Activated B cell treated with CpG ODN at 0.5 μM for 24 hours (primary cell): ENCODE measurements at regions of chr13 and their contacts with region 1.

Region 1: DNA sequence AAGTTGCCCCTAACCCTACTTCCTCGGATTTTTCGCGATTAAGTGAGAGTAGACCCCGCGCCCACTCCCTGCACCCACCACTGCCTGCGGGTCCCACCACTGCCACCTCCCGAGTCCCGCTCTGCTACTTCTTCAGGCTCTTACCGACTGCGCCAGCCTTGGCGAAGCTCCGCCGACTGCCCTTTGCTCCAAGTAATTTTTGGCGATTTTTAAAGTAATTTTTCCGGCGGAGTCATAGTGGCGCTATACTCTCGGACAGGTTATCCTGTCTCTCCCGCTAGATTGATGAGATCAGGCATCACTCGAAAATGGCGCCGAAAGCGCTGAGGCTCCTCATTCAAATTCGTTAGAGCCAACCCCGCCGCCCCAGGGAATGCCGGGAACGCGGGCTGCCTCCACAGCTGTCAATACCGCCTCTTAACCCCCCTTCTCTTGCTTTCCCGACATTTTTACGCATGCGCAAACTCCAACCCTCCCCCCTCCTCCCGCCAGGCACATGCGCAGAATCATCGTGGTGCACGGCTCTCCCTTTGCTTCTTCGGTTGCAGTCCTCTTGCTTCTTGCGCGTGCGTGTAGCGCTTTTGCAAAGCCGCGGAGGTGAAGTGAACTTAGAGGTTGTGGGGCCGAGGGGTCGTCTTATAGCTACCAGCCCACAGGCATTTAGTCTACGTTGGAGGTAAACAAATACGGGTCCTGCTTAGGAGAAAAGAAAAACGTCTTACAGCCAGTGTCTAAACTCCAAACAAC is 66.6 kb downstream of the KCNRG start:
- DNase-seq: peak; percentile 95
- ATAC-seq: peak; percentile 73
- H3K4me3 Mint-ChIP-seq: peak overlapping the region; percentile 100
- H3K27ac Mint-ChIP-seq: peak overlapping the region; percentile 100
- H3K4me1 Mint-ChIP-seq: peaks cover 62% of the 10 kb centered on the region
- H3K27me3 Mint-ChIP-seq: no peaks in the 10 kb centered on the region
- CTCF ChIP-seq: no peak

Region 2: GRCh38 chr13:49936085-49936940 is 145.5 kb before region 1 on chr13 and contains the start of gene SPRYD7:
- CTCF ChIA-PET with region 1: no interaction called
- POLR2A ChIA-PET with region 1: interaction called, 15 read pairs
- intact Hi-C with region 1: loop called (anchors 1 kb)
- DNase-seq: peak; percentile 100
- ATAC-seq: peak; percentile 98
- H3K4me3 Mint-ChIP-seq: peak within 1 kb of the TSS; percentile 97
- H3K27ac Mint-ChIP-seq: peak within 1 kb of the TSS; percentile 91
- H3K4me1 Mint-ChIP-seq: peaks cover 32% of the 10 kb centered on the region
- H3K27me3 Mint-ChIP-seq: no peaks in the 10 kb centered on the region
- CTCF ChIP-seq: no peak
- total RNA-seq, gene SPRYD7: 3.7 and 4.5 TPM in 2 replicates

Region 3: DNA sequence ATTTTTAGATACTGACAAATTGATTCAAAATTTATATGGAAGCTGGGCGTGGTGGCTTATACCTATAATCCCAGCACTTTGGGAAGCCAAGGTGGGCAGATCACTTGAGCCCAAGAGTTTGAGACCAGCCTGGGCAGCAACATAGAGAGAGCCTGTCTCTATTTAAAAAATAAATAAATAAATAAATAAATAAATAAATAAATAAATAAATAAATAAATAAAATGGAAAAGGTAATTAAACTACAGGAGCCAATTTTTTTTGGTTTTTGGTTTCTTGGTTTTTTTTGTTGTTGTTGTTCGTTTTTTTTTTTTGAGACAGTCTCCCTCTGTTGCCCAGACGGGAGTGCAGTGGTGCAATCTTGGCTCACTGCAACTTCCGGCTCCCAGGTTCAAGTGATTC is 114.4 kb before region 1 on chr13:
- CTCF ChIA-PET with region 1: no interaction called
- POLR2A ChIA-PET with region 1: no interaction called
- intact Hi-C with region 1: no loop called
- DNase-seq: no peak
- ATAC-seq: no peak
- H3K4me3 Mint-ChIP-seq: no peak overlapping the region
- H3K27ac Mint-ChIP-seq: no peak overlapping the region
- H3K4me1 Mint-ChIP-seq: no peaks in the 10 kb centered on the region
- H3K27me3 Mint-ChIP-seq: no peaks in the 10 kb centered on the region
- CTCF ChIP-seq: no peak

Region 4: GRCh38 chr13:50106559-50106958 is 24.7 kb after region 1 on chr13:
- CTCF ChIA-PET with region 1: interaction called, 14 read pairs
- POLR2A ChIA-PET with region 1: interaction called, 43 read pairs
- intact Hi-C with region 1: loop called (anchors 1 kb)
- DNase-seq: no peak
- ATAC-seq: peak; percentile 85
- H3K4me3 Mint-ChIP-seq: peak overlapping the region; percentile 67
- H3K27ac Mint-ChIP-seq: peak overlapping the region; percentile 94
- H3K4me1 Mint-ChIP-seq: peaks cover 75% of the 10 kb centered on the region
- H3K27me3 Mint-ChIP-seq: no peaks in the 10 kb centered on the region
- CTCF ChIP-seq: no peak

Region 5: DNA sequence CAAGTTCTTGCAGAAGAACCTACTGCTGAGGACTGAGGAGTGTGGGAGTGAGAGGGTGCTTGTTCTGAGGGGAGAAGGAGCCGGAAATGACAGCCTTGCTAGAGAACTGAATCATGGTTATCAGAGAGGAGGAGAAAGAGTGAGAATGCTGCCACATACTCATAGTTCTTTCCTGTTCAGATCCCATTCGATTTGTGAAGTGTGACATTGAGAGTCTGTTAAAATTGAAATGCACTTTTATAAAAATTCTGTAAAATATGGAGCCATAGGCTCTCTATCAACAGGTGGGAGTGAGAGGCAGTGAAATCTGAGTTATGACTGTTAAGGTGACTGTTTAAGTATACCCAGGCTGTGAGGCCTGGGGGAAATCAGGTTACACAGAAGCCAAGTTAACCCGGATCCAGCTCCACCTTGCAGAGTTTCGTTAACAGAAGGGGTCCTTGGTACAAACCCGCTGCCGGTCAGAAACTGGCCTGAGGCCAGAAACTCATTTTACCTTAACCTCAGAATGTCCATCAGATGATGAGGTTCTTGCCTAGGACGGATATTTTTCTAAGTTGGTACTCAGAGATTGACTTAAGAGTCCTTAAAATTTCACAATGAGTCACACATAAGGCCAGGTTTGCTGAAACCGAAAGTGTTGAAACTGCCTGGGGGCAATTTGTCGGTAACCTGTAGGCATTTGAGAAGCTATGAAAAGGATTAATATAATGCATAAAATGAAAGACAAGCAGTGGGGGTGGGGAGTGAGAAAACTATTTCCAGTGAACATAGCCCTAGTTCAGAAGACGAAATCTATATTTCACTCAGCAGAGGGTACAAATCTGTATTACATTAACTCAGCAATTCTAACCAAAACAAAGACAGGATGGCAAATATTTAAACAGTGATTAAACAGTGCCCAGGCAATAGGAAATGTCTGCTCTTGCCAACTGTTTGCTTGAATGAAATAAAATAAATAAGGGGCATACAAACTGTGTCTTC is 283.8 kb after region 1 on chr13:
- CTCF ChIA-PET with region 1: interaction called, 4 read pairs
- POLR2A ChIA-PET with region 1: interaction called, 19 read pairs
- intact Hi-C with region 1: loop called (anchors 1 kb)
- DNase-seq: no peak
- ATAC-seq: peak; percentile 28
- H3K4me3 Mint-ChIP-seq: peak overlapping the region; percentile 63
- H3K27ac Mint-ChIP-seq: peak overlapping the region; percentile 86
- H3K4me1 Mint-ChIP-seq: peaks cover 57% of the 10 kb centered on the region
- H3K27me3 Mint-ChIP-seq: no peaks in the 10 kb centered on the region
- CTCF ChIP-seq: no peak

Region 6: DNA sequence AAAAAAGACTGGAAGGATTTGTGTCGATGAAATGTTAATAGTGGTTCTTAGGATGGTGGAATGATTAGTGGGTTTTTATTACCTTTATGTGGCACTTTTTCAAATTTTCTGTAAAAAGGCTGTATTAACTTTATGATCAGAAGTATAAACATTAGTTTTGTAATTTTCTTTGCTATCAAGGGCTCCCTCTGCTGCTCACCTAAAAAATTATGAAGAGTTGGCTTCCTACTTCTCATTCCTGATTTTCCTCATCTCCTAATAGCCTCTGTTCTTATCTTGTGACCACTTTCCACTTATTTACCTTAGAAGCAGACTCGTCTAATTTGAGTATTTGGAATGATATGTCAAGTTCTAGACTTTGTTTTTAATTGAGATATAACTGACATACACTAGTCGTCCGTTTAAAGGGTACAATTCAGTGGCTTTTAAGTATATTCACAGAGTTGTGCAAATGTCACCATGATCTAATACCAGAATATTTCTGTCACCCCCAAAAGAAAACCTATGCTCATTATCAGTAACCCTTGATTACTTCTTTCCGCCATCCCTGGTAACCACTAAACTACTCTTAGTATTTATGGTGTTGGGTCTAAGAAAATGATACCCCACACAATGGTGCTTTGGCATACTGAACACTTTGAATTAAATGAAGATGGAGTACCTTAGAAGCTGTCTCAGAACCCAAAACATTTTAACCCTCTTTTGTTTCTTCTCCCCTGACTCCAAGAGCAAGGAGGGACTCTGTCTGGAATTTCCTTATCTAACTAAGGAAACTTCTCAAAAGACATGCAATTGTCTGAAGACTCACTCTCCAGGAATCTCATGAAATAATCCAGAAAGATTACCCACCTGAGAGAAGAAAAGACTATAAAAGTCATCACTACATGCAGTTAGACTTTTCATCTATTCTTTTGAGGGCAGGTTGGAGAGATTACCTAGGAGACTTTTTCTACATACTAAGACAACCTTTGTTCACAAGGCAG is 450.4 kb after region 1 on chr13:
- CTCF ChIA-PET with region 1: interaction called, 3 read pairs
- POLR2A ChIA-PET with region 1: no interaction called
- intact Hi-C with region 1: loop called (anchors 1 kb)
- DNase-seq: no peak
- ATAC-seq: no peak
- H3K4me3 Mint-ChIP-seq: no peak overlapping the region
- H3K27ac Mint-ChIP-seq: no peak overlapping the region
- H3K4me1 Mint-ChIP-seq: peaks cover 15% of the 10 kb centered on the region
- H3K27me3 Mint-ChIP-seq: no peaks in the 10 kb centered on the region
- CTCF ChIP-seq: no peak

Region 7: GRCh38 chr13:50810998-50811397 is 729.1 kb after region 1 on chr13:
- CTCF ChIA-PET with region 1: no interaction called
- POLR2A ChIA-PET with region 1: interaction called, 10 read pairs
- intact Hi-C with region 1: no loop called
- DNase-seq: no peak
- ATAC-seq: peak; percentile 93
- H3K4me3 Mint-ChIP-seq: peak overlapping the region; percentile 65
- H3K27ac Mint-ChIP-seq: peak overlapping the region; percentile 84
- H3K4me1 Mint-ChIP-seq: peaks cover 43% of the 10 kb centered on the region
- H3K27me3 Mint-ChIP-seq: no peaks in the 10 kb centered on the region
- CTCF ChIP-seq: no peak

Region 8: DNA sequence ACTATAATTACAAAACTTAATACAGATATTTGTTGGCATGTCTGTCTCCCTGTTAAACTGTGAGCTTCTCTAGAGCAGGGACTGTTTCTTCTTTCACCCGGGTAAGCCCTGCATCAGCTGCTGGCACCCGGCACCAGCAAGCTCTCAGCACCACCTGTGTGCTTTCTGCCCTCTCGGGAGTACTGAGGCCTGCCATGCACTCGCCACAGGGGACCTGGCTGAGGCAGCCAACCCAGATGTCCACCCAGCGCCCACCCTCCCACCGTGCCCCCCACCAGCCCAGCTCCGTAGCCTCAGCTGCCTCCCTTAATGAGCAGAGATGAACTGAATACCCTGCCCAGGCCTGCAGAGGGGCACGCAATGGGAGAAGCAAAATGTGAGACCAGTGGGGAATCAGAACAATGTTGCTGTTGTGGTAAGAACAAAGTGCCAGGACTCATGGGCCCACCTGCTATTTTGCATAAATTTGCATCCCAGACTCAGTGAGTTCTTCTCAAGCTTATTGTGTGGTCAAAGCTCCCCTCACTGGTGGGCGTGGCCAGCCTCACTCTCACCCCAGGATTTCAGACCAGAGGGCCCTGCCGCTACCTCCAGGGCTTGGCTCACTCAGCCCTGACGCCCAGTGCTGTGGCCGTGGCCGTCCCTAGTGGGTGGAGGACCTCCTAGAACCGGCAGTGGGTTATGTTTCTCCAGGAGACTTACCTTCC is 1243.0 kb after region 1 on chr13:
- CTCF ChIA-PET with region 1: no interaction called
- POLR2A ChIA-PET with region 1: no interaction called
- intact Hi-C with region 1: no loop called
- DNase-seq: no peak
- ATAC-seq: no peak
- H3K4me3 Mint-ChIP-seq: no peak overlapping the region
- H3K27ac Mint-ChIP-seq: no peak overlapping the region
- H3K4me1 Mint-ChIP-seq: peaks cover 7% of the 10 kb centered on the region
- H3K27me3 Mint-ChIP-seq: no peaks in the 10 kb centered on the region
- CTCF ChIP-seq: no peak